Right cardiac atrium (tissue), 5 donors: ENCODE measurements at regions of chr2 and their contacts with region 1.

Region 1: DNA sequence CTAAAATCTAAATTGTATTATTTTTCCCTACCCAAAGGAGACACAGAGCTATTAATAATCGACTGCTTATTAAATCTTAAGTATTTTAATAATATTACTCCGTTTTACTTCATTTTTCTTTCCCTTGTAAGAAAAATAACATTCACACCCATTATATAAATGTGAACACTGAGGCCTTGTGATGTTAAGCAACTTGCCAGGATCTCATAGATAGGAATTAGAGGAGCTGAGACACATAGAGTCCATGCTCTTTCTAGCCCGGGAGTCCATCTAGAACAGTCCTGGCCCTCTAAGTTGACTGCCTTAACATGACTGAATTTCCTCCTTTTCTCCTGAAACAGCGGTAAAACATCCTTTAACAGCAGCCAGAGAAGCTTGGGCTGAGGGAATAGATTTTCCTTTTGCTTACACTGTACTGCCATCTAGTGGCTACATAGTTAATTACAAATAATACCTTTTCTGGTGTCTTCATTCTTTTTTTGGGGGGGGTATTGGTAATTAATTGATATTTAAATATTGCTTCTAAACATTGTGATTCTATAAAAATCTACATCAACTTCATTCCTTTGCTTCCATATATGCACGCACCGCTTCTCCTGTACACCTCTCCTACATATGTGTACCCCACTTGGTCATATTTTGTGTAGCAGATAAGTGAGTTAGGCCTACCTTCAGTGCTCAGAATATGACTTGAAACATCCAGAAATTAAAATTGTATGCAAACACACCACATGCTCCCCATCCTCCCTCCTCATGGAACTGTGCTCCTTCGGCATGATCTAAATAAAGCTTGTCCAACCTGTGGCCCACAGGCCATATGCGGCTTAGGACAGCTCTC is 125.8 kb upstream of the HNMT start:
- DNase-seq: no peak
- ATAC-seq: peak in 1 of 2 donors; percentile 25
- H3K4me3 ChIP-seq: no peak overlapping the region
- H3K27ac ChIP-seq: no peak overlapping the region
- H3K4me1 ChIP-seq: no peaks in the 10 kb centered on the region
- H3K27me3 ChIP-seq: no peaks in the 10 kb centered on the region

Region 2: DNA sequence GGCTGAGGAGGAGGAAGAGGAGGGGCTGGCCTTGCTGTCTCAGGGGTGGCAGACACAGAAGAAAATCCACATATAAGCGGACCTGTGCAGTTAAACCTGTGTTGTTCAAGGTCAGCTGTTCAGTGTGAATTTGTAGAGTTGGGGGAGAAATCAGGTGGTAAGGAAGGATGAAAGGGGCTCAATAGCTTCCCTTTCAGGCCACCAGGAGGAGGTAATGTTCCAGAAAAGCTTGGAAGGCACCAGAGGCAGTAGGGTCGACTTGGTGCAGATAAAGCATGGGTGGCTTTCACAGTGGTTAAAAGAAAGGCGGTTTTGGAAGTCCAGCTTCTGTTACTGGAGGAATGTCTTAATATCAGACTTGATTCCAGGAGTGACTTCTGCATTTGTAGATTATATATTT is 905.8 kb before region 1 on chr2:
- intact Hi-C with region 1: loop called in 2 of 4 experiments (anchors 10 kb)
- DNase-seq: no peak
- ATAC-seq: peak in 1 of 2 donors; percentile 54
- H3K4me3 ChIP-seq: no peak overlapping the region
- H3K27ac ChIP-seq: no peak overlapping the region
- H3K4me1 ChIP-seq: no peaks in the 10 kb centered on the region
- H3K27me3 ChIP-seq: no peaks in the 10 kb centered on the region

Region 3: GRCh38 chr2:138432971-138433370 is 594.5 kb after region 1 on chr2:
- intact Hi-C with region 1: no loop called
- DNase-seq: no peak
- ATAC-seq: no peak
- H3K4me3 ChIP-seq: no peak overlapping the region
- H3K27ac ChIP-seq: no peak overlapping the region
- H3K4me1 ChIP-seq: no peaks in the 10 kb centered on the region
- H3K27me3 ChIP-seq: no peaks in the 10 kb centered on the region